ENCODE measurements at regions of chr6 and their contacts with region 1.

Region 1: DNA sequence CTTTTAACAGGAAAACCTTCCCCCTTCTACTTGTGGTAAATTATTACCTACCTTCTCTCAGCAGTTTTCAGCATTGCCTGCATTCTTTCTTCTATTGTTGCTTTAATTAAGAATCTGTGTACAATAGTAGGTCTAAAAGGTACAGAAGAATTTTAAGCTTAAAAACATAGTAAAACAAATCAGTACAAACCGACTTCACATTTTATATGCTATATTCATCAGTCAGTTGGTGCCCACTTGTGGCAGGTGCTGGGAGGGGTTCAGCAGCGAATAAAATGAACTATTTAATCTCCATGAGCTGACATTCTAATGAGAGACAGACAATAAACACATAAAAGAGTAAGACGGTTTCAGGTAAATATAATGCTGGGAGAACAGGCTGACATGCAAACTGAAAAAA is 73.4 kb upstream of the FBXO30 start:
- DNase-seq: peak; percentile 26
- ATAC-seq: no peak
- H3K4me3 ChIP-seq: no peak overlapping the region
- H3K27ac ChIP-seq: no peak overlapping the region
- H3K4me1 ChIP-seq: peaks cover 15% of the 10 kb centered on the region
- H3K27me3 ChIP-seq: no peaks in the 10 kb centered on the region
- CTCF ChIP-seq: peak; percentile 66

Region 2: DNA sequence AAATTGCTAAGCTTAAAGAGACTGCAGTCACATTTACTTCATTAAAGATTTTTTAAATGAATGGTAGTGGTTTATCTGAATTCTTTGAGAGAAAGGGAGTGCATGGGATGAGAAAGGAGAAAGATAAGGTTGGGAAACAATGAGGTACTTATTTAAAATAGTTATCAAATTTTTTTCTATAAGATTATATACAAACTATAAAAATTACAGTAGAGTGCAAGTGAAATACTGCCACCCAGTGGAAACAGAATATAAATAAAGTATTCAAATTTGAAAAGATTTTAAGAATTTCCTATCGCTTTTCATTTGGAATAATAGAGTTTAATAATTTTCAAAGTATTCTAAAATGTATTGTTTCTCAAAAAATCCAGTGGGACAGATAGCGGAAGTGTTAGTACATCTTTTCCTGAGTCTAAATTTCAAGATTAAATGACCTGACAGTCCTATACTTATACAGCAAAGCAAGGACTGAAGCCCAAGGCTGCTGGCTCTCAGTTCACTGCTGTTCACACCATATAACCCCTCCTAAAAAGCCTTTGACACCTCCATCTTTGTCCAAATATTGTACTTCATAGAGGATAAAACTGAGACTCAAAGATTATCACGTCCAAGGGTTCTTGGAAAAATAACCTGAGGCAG is 183.7 kb before region 1 on chr6:
- CTCF ChIA-PET with region 1: no interaction called
- POLR2A ChIA-PET with region 1: interaction called, 5 read pairs
- intact Hi-C with region 1: loop called (anchors 10 kb)
- DNase-seq: peak; percentile 45
- ATAC-seq: no peak
- H3K4me3 ChIP-seq: no peak overlapping the region
- H3K27ac ChIP-seq: no peak overlapping the region
- H3K4me1 ChIP-seq: peaks cover 18% of the 10 kb centered on the region
- H3K27me3 ChIP-seq: no peaks in the 10 kb centered on the region
- CTCF ChIP-seq: peak; percentile 52

Region 3: DNA sequence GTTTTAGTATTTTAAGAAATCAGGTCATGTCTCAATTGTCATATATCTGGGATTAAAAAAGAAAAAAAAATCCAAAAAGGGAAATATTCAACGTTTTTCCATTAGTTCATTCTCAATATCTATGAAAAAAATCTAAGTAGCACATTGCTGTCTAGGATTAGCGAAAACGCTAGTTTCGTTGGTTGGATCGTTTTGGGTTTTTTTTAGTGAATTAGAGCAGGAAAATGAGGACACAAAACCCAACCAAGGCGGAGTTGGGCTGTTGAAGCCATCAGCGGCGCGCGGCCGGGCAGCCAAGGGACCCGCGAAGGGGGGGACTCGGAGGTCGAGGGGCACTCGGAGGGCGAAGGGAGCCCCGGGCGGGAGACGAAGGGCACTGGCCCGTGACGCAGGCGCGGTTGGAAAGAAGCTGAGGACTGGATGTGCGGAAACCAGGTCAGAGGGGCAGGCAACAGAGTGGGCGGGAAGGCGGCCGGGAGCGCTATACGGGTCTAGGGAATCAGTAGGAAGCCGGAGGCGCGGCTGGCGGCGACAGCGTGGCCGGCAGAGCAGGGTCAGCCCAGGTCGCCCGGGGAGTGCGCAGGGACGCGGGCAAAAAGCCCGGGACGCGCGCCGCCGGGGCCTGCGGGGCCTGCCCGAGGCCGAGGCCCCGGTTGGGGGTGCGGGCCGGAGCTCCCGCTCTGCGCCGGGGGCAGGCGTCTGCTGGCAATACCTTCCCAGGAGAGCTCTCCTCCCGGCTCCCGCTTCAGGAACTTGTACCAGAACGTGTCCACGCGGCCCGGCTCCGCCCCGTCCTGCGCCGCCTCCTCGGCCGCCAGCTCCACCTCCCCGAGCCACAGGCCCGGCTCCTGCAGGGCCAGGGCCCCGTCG is 153.2 kb before region 1 on chr6:
- CTCF ChIA-PET with region 1: interaction called, 3 read pairs
- POLR2A ChIA-PET with region 1: no interaction called
- intact Hi-C with region 1: loop called (anchors 5 kb)
- DNase-seq: peak; percentile 80
- ATAC-seq: peak; percentile 93
- H3K4me3 ChIP-seq: peak overlapping the region; percentile 81
- H3K27ac ChIP-seq: peak overlapping the region; percentile 84
- H3K4me1 ChIP-seq: peaks cover 13% of the 10 kb centered on the region; the same call in 1 of the 2 replicates
- H3K27me3 ChIP-seq: no peaks in the 10 kb centered on the region
- CTCF ChIP-seq: no peak

Region 4: GRCh38 chr6:145814501-145815308 is 73.3 kb before region 1 on chr6 and contains the start of gene FBXO30:
- CTCF ChIA-PET with region 1: interaction called, 3 read pairs
- POLR2A ChIA-PET with region 1: no interaction called
- intact Hi-C with region 1: loop called (anchors 1 kb)
- DNase-seq: peak; percentile 75
- ATAC-seq: peak; percentile 88
- H3K4me3 ChIP-seq: peak within 1 kb of the TSS; percentile 82
- H3K27ac ChIP-seq: peak within 1 kb of the TSS; percentile 63
- H3K4me1 ChIP-seq: peaks cover 33% of the 10 kb centered on the region
- H3K27me3 ChIP-seq: no peaks in the 10 kb centered on the region
- CTCF ChIP-seq: no peak
- total RNA-seq, gene FBXO30: 2.5 and 3.1 TPM in 2 replicates

Measured in PC-3 (cell line).